Activated naive CD4-positive, alpha-beta T cell treated with anti-CD3 and anti-CD28 coated beads for 36 hours (primary cell): ENCODE measurements at regions of chr3 and their contacts with region 1.

Region 1: DNA sequence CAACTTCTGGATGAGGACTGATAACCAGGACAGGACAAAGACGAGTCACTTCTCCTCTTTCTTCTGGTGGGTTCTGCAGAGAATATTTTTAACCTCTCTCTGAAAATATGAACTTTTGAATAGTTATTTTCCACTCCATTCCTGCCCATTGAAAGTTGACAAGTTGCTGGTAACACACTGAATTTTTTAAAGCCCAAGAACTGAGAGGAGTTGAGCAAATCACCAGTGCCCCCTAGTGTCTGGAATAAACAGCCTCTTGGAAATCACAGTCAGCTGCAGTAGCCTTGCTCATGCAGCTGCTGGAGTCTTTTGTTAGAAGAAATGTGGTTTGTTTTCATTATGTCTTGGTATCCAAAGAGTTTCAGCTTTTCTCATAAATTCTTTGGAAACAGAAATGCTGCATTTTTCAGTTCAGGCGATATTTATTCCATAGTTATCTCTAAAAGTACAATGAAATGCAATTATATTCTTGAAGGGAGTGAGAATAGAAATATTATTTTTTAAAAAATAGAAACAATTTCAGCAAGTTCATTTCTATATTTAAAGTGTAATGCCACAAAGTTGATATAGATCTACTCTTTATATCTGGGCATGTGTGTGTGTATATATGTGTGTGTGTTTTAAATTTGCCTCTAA is 741.0 kb upstream of the CBLB start:
- DNase-seq: peak; percentile 82
- H3K4me3 Mint-ChIP-seq: no peak overlapping the region
- H3K27ac Mint-ChIP-seq: no peak overlapping the region
- H3K4me1 Mint-ChIP-seq: peaks cover 21% of the 10 kb centered on the region
- H3K27me3 Mint-ChIP-seq: no peaks in the 10 kb centered on the region

Region 2: GRCh38 chr3:105686278-105686897 is 923.4 kb before region 1 on chr3:
- CTCF ChIA-PET with region 1: interaction called, 3 read pairs
- intact Hi-C with region 1: loop called (anchors 1 kb)
- DNase-seq: no peak
- H3K4me3 Mint-ChIP-seq: no peak overlapping the region
- H3K27ac Mint-ChIP-seq: no peak overlapping the region
- H3K4me1 Mint-ChIP-seq: peaks cover 26% of the 10 kb centered on the region
- H3K27me3 Mint-ChIP-seq: no peaks in the 10 kb centered on the region

Region 3: GRCh38 chr3:106013971-106014370 is 595.8 kb before region 1 on chr3:
- CTCF ChIA-PET with region 1: no interaction called
- intact Hi-C with region 1: loop called (anchors 5 kb)
- DNase-seq: no peak
- H3K4me3 Mint-ChIP-seq: no peak overlapping the region
- H3K27ac Mint-ChIP-seq: peak overlapping the region; percentile 37
- H3K4me1 Mint-ChIP-seq: peaks cover 49% of the 10 kb centered on the region
- H3K27me3 Mint-ChIP-seq: no peaks in the 10 kb centered on the region

Region 4: DNA sequence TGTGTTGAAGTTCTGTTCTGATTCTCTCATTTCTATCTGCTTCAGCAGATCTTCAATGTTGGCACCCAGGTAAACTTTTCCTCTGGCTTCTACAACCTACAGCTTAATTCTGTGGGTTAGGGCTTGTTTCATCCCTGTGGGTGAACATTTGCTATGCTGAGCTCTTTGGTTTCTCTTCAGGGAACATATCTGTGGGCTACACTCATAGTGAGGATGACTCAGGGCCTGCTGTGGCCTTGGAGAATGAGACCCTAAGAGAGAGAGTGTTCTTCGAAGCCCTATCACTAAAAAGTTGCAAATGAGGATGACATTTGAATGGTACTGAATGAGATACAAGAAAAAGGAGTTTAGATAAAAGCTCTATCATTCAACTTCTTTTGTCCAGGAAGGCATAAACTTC is 394.7 kb before region 1 on chr3:
- CTCF ChIA-PET with region 1: interaction called, 4 read pairs
- intact Hi-C with region 1: loop called (anchors 5 kb)
- DNase-seq: peak; percentile 56
- H3K4me3 Mint-ChIP-seq: no peak overlapping the region
- H3K27ac Mint-ChIP-seq: peak overlapping the region; percentile 81
- H3K4me1 Mint-ChIP-seq: peaks cover 61% of the 10 kb centered on the region
- H3K27me3 Mint-ChIP-seq: no peaks in the 10 kb centered on the region

Region 5: GRCh38 chr3:106423321-106424225 is 186.2 kb before region 1 on chr3:
- CTCF ChIA-PET with region 1: no interaction called
- intact Hi-C with region 1: loop called (anchors 1 kb)
- DNase-seq: peak; percentile 55
- H3K4me3 Mint-ChIP-seq: no peak overlapping the region
- H3K27ac Mint-ChIP-seq: peak overlapping the region; percentile 80
- H3K4me1 Mint-ChIP-seq: peaks cover 46% of the 10 kb centered on the region
- H3K27me3 Mint-ChIP-seq: peaks cover 2% of the 10 kb centered on the region